Activated T-helper 1 cell treated with anti-CD3 and anti-CD28 coated beads, Interleukin-12 subunit alpha, Interleukin-12 subunit beta, Interleukin-2, Interleukin-4 antibody, amounts not matched to agents 30 ng/mL and 10 ng/mL and 1 ng/mL, durations not matched to agents 14 hours and 24 hours and 36 hours (primary cell): ENCODE measurements at regions of chr1 and their contacts with region 1.

Region 1: GRCh38 chr1:36223993-36224536 is at the start of gene THRAP3:
- DNase-seq: peak; percentile 100
- H3K4me3 Mint-ChIP-seq: peak within 1 kb of the TSS; percentile 95
- H3K27ac Mint-ChIP-seq: peak within 1 kb of the TSS; percentile 100
- H3K4me1 Mint-ChIP-seq: peaks cover 36% of the 10 kb centered on the region
- H3K27me3 Mint-ChIP-seq: peaks cover 2% of the 10 kb centered on the region
- total RNA-seq, gene THRAP3: 147 and 154 TPM in 2 replicates

Region 2: GRCh38 chr1:35930593-35931445 is 293.2 kb before region 1 on chr1 and contains the start of gene AGO3:
- intact Hi-C with region 1: loop called (anchors 5 kb)
- DNase-seq: peak; percentile 87
- H3K4me3 Mint-ChIP-seq: peak within 1 kb of the TSS; percentile 93
- H3K27ac Mint-ChIP-seq: peak within 1 kb of the TSS; percentile 97
- H3K4me1 Mint-ChIP-seq: peaks cover 36% of the 10 kb centered on the region
- H3K27me3 Mint-ChIP-seq: no peaks in the 10 kb centered on the region
- total RNA-seq, gene AGO3: 26.1 and 33.6 TPM in 2 replicates

Region 3: DNA sequence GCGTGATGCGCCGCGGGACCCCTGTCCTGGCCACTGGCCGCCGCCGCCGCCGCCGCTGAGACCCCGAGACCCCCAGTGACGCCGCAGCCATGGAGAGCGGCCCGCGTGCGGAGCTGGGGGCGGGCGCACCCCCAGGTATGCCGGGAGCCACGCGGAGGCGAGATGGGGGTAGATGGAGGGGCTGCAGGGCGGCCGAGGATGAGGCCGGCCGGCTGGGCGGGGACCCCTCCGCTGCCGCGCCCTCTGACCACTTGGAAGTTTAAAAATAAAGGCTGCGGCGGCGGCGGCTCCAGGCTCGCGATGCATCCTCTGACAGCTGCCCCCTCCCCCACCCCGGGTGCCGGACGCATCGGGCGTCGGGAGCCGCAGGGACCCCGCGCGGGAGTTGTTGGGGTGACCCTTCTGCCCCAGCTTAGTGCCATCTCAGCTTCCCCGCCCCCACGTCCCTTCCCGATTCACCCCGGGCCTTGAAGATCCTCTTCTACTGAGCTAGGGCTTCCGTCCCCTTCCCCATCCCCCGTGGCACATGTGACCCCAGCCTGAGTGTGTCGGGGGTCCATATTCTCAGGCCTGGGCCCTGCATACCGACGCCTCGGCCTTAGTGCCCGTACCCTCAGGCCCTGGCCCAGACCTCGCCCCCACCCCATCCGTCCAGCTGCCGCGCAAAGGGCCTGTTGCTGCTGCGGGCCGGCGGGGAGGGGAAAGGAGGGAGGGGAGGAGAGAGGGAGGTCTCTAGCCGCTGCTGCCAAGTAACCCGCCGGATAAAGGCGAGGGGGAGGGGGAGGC is 67.5 kb before region 1 on chr1:
- intact Hi-C with region 1: loop called (anchors 2 kb)
- DNase-seq: peak; percentile 56
- H3K4me3 Mint-ChIP-seq: peak overlapping the region; percentile 83
- H3K27ac Mint-ChIP-seq: peak overlapping the region; percentile 92
- H3K4me1 Mint-ChIP-seq: peaks cover 68% of the 10 kb centered on the region
- H3K27me3 Mint-ChIP-seq: no peaks in the 10 kb centered on the region

Region 4: GRCh38 chr1:36206323-36206858 is 17.7 kb before region 1 on chr1:
- intact Hi-C with region 1: loop called (anchors 1 kb)
- DNase-seq: no peak
- H3K4me3 Mint-ChIP-seq: no peak overlapping the region
- H3K27ac Mint-ChIP-seq: peak overlapping the region; percentile 29
- H3K4me1 Mint-ChIP-seq: peaks cover 10% of the 10 kb centered on the region
- H3K27me3 Mint-ChIP-seq: no peaks in the 10 kb centered on the region

Region 5: GRCh38 chr1:36306902-36307456 is 82.9 kb after region 1 on chr1:
- intact Hi-C with region 1: loop called (anchors 1 kb)
- DNase-seq: peak; percentile 94
- H3K4me3 Mint-ChIP-seq: peak overlapping the region; percentile 97
- H3K27ac Mint-ChIP-seq: peak overlapping the region; percentile 89
- H3K4me1 Mint-ChIP-seq: peaks cover 39% of the 10 kb centered on the region
- H3K27me3 Mint-ChIP-seq: no peaks in the 10 kb centered on the region

Region 6: GRCh38 chr1:37479255-37480124 is 1255.4 kb after region 1 on chr1:
- intact Hi-C with region 1: loop called (anchors 2 kb)
- DNase-seq: peak; percentile 84
- H3K4me3 Mint-ChIP-seq: peak overlapping the region; percentile 100
- H3K27ac Mint-ChIP-seq: peak overlapping the region; percentile 97
- H3K4me1 Mint-ChIP-seq: peaks cover 42% of the 10 kb centered on the region
- H3K27me3 Mint-ChIP-seq: peaks cover 2% of the 10 kb centered on the region